ENCODE measurements at regions of chr6 and their contacts with region 1.

Region 1: DNA sequence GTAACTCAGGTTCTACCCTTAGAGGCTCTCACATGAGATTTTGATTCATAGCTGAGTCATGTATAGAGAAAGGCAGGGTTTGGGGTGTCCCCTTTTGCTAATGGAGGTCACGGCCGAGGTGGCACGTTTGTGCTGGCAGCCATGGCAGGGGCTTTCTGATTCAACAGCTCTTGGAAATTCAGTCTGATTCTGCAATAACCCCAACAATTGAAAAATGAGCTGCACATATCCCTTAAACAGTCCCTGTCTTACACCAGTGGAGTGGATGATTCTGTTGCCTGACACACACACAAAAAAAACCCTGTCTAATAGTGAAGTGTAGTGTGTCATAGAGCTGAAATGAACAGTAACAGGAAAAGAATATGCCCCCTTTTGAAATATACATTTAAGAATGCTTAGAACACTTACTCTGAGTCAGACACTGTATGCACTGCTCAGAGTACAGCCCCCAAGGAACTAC is 40.4 kb upstream of the ARG1 start:
- DNase-seq: peak; percentile 82
- H3K4me3 Mint-ChIP-seq: no peak overlapping the region
- H3K27ac Mint-ChIP-seq: peak overlapping the region; percentile 76
- H3K4me1 Mint-ChIP-seq: peaks cover 42% of the 10 kb centered on the region
- H3K27me3 Mint-ChIP-seq: no peaks in the 10 kb centered on the region

Region 2: GRCh38 chr6:130885392-130886192 is 647.0 kb before region 1 on chr6:
- CTCF ChIA-PET with region 1: interaction called, 47 read pairs
- POLR2A ChIA-PET with region 1: no interaction called
- intact Hi-C with region 1: loop called (anchors 1 kb)
- DNase-seq: peak; percentile 72
- H3K4me3 Mint-ChIP-seq: no peak overlapping the region
- H3K27ac Mint-ChIP-seq: no peak overlapping the region
- H3K4me1 Mint-ChIP-seq: no peaks in the 10 kb centered on the region
- H3K27me3 Mint-ChIP-seq: no peaks in the 10 kb centered on the region

Region 3: GRCh38 chr6:131116749-131117360 is 415.8 kb before region 1 on chr6:
- CTCF ChIA-PET with region 1: interaction called, 7 read pairs
- POLR2A ChIA-PET with region 1: no interaction called
- intact Hi-C with region 1: loop called (anchors 5 kb)
- DNase-seq: no peak
- H3K4me3 Mint-ChIP-seq: no peak overlapping the region
- H3K27ac Mint-ChIP-seq: no peak overlapping the region
- H3K4me1 Mint-ChIP-seq: no peaks in the 10 kb centered on the region
- H3K27me3 Mint-ChIP-seq: peaks cover 1% of the 10 kb centered on the region

Region 4: DNA sequence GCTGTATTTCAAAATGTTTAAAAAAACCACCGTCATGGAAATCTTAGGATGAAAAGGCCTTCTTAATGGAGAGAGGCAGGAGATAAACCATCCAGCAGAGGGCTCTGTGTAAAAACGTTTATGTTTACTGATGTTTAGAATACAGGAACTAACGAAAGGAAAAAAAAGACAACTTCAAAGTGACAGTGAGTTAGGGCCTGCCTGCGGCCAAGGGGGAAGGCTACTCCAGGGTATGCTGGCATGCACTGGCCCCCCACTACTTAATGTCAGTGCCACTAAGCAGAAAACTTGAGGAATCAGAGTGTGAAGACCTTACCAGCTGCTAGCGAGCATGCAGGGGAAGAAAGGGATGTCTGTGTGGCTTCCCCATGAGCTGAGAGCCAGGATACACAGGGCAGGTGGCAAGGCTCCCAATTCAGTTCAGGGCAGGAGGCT is 349.6 kb before region 1 on chr6:
- CTCF ChIA-PET with region 1: interaction called, 65 read pairs
- POLR2A ChIA-PET with region 1: no interaction called
- intact Hi-C with region 1: loop called (anchors 1 kb)
- DNase-seq: no peak
- H3K4me3 Mint-ChIP-seq: no peak overlapping the region
- H3K27ac Mint-ChIP-seq: no peak overlapping the region
- H3K4me1 Mint-ChIP-seq: peaks cover 9% of the 10 kb centered on the region
- H3K27me3 Mint-ChIP-seq: no peaks in the 10 kb centered on the region

Region 5: GRCh38 chr6:131433927-131434326 is 98.7 kb before region 1 on chr6:
- CTCF ChIA-PET with region 1: no interaction called
- POLR2A ChIA-PET with region 1: no interaction called
- intact Hi-C with region 1: no loop called
- DNase-seq: no peak
- H3K4me3 Mint-ChIP-seq: no peak overlapping the region
- H3K27ac Mint-ChIP-seq: no peak overlapping the region
- H3K4me1 Mint-ChIP-seq: peaks cover 15% of the 10 kb centered on the region
- H3K27me3 Mint-ChIP-seq: no peaks in the 10 kb centered on the region

Region 6: DNA sequence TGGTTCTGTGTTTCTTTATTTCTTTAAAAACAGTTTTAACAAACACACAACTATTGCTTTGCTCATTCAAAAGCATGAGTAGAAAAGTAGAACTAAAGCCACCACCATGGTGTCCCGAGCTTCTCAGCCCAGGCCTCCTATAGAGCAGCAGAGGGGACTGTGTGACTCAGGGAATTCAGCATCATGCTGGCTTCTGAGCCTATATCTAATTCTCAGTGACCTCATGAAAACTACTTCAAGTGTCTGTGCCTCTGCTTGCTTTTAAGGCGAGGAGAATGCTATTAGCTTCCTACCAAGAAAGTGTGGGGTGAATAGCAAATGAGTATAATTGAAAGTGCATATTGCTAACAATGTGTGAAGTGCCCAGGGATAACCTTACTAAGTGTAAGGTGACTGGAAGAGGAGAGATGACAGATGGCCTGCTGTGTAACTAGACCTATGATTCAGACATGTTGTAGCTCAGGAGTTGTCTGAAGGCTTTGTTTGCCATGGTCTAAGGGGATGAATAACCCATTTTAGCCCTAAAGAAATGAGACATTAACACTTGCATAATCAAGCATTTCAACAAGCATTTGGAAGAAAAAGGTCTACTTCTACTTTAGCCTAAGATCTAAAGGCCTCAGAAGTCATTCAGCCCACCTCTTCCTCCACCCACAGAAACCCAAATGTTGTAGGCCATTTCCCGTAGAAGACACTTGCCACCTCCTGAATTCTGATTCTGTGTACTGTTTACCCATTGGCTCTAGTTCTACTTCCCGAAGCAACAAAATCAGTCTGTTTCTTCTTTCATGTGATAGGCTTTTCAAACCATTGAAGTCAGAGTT is 81.1 kb before region 1 on chr6:
- CTCF ChIA-PET with region 1: interaction called, 3 read pairs
- POLR2A ChIA-PET with region 1: no interaction called
- intact Hi-C with region 1: loop called (anchors 2 kb)
- DNase-seq: peak; percentile 12
- H3K4me3 Mint-ChIP-seq: no peak overlapping the region
- H3K27ac Mint-ChIP-seq: peak overlapping the region; percentile 71
- H3K4me1 Mint-ChIP-seq: peaks cover 26% of the 10 kb centered on the region
- H3K27me3 Mint-ChIP-seq: no peaks in the 10 kb centered on the region

Region 7: GRCh38 chr6:131688286-131688685 is 155.7 kb after region 1 on chr6:
- CTCF ChIA-PET with region 1: no interaction called
- POLR2A ChIA-PET with region 1: no interaction called
- intact Hi-C with region 1: loop called (anchors 2 kb)
- DNase-seq: no peak
- H3K4me3 Mint-ChIP-seq: no peak overlapping the region
- H3K27ac Mint-ChIP-seq: peak overlapping the region; percentile 34
- H3K4me1 Mint-ChIP-seq: peaks cover 18% of the 10 kb centered on the region
- H3K27me3 Mint-ChIP-seq: no peaks in the 10 kb centered on the region

Region 8: DNA sequence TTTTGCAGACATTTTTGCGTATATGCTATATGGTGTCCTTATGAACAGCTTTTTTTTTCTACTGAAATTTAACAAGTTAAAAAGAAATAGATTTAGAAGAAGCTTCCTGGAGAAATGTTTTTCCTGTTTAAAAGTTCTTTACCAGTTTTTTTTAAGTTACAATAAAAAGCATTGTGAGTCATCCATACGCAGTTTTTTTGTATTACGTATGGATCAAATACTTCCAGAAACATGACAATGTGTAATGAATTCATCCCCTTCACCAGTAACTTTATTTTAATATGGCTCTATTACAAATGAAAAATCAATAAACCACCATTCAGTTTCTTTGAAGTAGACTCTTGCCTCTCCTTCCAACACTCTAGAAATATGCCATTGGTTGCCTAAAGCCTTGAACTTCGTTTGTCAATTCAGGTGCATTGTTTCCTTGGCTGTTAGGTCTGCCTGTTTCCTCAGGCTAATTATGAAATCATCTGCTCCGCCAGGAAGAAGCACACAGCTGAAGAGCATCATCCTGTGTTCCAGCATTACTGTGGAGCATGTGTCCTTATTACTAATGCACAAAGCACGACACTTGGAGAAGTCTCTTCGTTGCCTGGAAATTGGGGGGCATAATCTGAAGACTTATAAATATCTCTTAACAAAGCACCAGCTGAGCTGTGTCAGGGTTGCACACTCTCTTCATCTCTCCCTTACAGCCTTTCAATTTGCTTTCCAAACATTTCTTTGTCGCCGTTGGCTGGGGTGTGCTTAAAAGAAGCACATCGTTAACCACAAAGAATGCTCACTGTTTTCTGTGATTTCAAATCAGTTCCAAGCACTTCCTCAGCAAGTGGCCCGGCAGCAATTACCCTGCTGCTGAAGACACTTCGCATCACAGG is 859.0 kb after region 1 on chr6:
- CTCF ChIA-PET with region 1: no interaction called
- POLR2A ChIA-PET with region 1: no interaction called
- intact Hi-C with region 1: no loop called
- DNase-seq: no peak
- H3K4me3 Mint-ChIP-seq: no peak overlapping the region
- H3K27ac Mint-ChIP-seq: no peak overlapping the region
- H3K4me1 Mint-ChIP-seq: no peaks in the 10 kb centered on the region
- H3K27me3 Mint-ChIP-seq: peaks cover 24% of the 10 kb centered on the region

Measured in activated CD4-positive, alpha-beta memory T cell treated with anti-CD3 and anti-CD28 coated beads for 36 hours (primary cell).